Mammary epithelial cell (primary cell): ENCODE measurements at regions of chr10 and their contacts with region 1.

Region 1: GRCh38 chr10:33330543-33331378 is 3.7 kb downstream of the NRP1 start:
- DNase-seq: peak; percentile 73
- H3K4me3 ChIP-seq: peak overlapping the region; percentile 91 to 95 (median 91)
- H3K27ac ChIP-seq: peak overlapping the region; percentile 55
- H3K4me1 ChIP-seq: peaks cover 40% of the 10 kb centered on the region
- H3K27me3 ChIP-seq: no peaks in the 10 kb centered on the region
- CTCF ChIP-seq: peak; percentile 88 to 91

Region 2: GRCh38 chr10:32795598-32796183 is 535.1 kb before region 1 on chr10:
- CTCF ChIA-PET with region 1: no interaction called
- dilution Hi-C with region 1: no loop called
- in situ Hi-C with region 1: no loop called
- intact Hi-C with region 1: loop called (anchors 10 kb)
- DNase-seq: peak; percentile 17
- H3K4me3 ChIP-seq: no peak overlapping the region
- H3K27ac ChIP-seq: no peak overlapping the region
- H3K4me1 ChIP-seq: no peaks in the 10 kb centered on the region
- H3K27me3 ChIP-seq: no peaks in the 10 kb centered on the region
- CTCF ChIP-seq: peak; percentile 61 to 71

Region 3: GRCh38 chr10:33291053-33291592 is 39.6 kb before region 1 on chr10:
- CTCF ChIA-PET with region 1: no interaction called
- dilution Hi-C with region 1: no loop called
- in situ Hi-C with region 1: no loop called
- intact Hi-C with region 1: no loop called
- DNase-seq: peak; percentile 88
- H3K4me3 ChIP-seq: no peak overlapping the region
- H3K27ac ChIP-seq: peak overlapping the region; percentile 99
- H3K4me1 ChIP-seq: peaks cover 24% of the 10 kb centered on the region
- H3K27me3 ChIP-seq: no peaks in the 10 kb centered on the region
- CTCF ChIP-seq: no peak

Region 4: DNA sequence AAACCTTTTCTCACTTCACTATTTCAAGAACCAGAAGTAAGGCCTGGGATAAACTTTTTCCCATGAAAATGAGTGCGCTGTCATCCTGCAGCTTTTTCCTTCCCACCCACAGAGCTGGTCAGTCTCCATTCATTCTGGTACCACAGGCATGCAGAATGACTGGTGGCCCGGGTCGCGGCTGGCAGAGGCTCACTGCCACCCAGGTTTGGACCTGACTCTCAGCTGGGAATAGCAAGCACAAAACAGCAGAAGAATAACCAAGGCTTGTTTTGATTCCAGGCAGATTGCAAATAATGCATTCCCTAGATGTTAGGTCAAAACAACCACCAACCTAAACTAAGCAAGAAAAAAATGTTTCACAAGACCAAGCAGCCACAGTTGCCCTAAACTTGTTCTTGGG is 194.2 kb after region 1 on chr10:
- CTCF ChIA-PET with region 1: no interaction called
- dilution Hi-C with region 1: no loop called
- in situ Hi-C with region 1: no loop called
- intact Hi-C with region 1: loop called (anchors 5 kb)
- DNase-seq: peak; percentile 74
- H3K4me3 ChIP-seq: no peak overlapping the region
- H3K27ac ChIP-seq: no peak overlapping the region
- H3K4me1 ChIP-seq: peaks cover 5% of the 10 kb centered on the region
- H3K27me3 ChIP-seq: no peaks in the 10 kb centered on the region
- CTCF ChIP-seq: no peak

Region 5: DNA sequence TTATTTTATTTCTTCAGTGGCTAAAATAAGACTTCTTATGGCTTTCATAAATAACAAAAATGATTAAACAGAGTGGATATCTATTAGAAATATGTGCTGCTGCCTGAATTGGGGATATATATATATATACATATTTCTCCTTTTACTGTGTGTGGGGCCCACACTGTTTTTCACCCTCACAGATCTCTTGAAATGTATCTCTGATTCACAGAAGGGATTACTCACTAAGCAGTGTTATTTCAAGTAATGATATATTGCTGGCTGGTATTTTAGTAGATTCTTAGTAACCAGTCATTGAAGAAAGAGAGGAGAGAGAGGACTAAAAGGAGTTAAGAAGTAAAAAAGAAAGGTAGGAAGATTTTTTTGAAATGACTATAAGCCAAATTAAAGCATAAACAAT is 312.3 kb after region 1 on chr10:
- CTCF ChIA-PET with region 1: no interaction called
- dilution Hi-C with region 1: no loop called
- in situ Hi-C with region 1: no loop called
- intact Hi-C with region 1: loop called (anchors 5 kb)
- DNase-seq: peak; percentile 63
- H3K4me3 ChIP-seq: no peak overlapping the region
- H3K27ac ChIP-seq: no peak overlapping the region
- H3K4me1 ChIP-seq: no peaks in the 10 kb centered on the region
- H3K27me3 ChIP-seq: no peaks in the 10 kb centered on the region
- CTCF ChIP-seq: no peak

Region 6: GRCh38 chr10:33901166-33901565 is 570.4 kb after region 1 on chr10:
- CTCF ChIA-PET with region 1: no interaction called
- dilution Hi-C with region 1: no loop called
- in situ Hi-C with region 1: loop called in 1 of 2 experiments (anchors 25 kb)
- intact Hi-C with region 1: loop called (anchors 1 kb)
- DNase-seq: peak; percentile 65
- H3K4me3 ChIP-seq: no peak overlapping the region
- H3K27ac ChIP-seq: peak overlapping the region; percentile 96
- H3K4me1 ChIP-seq: peaks cover 38% of the 10 kb centered on the region
- H3K27me3 ChIP-seq: no peaks in the 10 kb centered on the region
- CTCF ChIP-seq: peak in 1 of 2 donors; percentile 16

Region 7: DNA sequence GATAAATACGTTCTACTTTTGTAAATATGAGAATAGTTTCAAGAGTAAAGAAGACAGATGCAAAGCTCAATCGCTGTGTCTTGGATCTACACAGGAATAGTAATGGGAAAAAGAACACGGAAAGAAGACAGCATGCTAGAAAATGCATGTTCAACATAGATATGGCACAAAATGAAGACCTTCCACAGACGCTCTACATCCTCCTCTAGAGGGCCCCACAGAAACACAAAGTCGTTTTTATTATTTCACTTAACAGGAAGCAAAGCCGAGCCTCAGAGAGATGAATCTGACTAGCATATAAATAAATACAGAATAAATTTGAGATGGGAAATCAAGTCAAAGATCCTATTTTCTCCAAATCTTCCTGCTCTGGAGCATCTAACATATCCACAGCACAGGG is 1191.8 kb after region 1 on chr10:
- CTCF ChIA-PET with region 1: no interaction called
- dilution Hi-C with region 1: no loop called
- in situ Hi-C with region 1: no loop called
- intact Hi-C with region 1: loop called (anchors 10 kb)
- DNase-seq: no peak
- H3K4me3 ChIP-seq: no peak overlapping the region
- H3K27ac ChIP-seq: no peak overlapping the region
- H3K4me1 ChIP-seq: peaks cover 38% of the 10 kb centered on the region
- H3K27me3 ChIP-seq: no peaks in the 10 kb centered on the region
- CTCF ChIP-seq: peak in 1 of 2 donors; percentile 16